ENCODE measurements at regions of chr1 and their contacts with region 1.

Region 1: GRCh38 chr1:36342481-36343478 is 19.3 kb upstream of the EVA1B start:
- DNase-seq: no peak
- ATAC-seq: peak; percentile 82

Region 2: DNA sequence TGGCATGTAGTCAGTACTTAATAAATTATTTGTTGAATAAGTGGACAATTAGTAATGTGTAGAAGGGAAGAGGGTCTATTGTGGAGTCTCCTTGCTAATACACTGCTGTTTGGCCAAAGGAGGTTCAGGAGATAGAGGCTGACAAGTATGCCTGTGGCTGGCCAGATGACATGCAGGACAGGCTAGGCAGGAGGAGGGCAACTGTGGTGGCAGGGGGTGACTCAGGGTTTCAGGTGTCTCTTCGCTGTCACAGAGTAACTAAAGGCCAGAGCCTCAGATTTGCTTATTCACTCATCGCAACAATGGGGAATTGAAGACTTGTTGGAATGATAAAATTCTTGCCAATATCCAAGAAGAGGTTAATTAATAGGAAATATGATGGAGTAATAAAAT is 85.4 kb before region 1 on chr1:
- intact Hi-C with region 1: no loop called
- DNase-seq: no peak
- ATAC-seq: no peak

Region 3: GRCh38 chr1:36420836-36421664 is 78.3 kb after region 1 on chr1:
- intact Hi-C with region 1: loop called (anchors 5 kb)
- DNase-seq: peak; percentile 96
- ATAC-seq: peak; percentile 93